Psoas muscle (tissue), 8 donors: ENCODE measurements at regions of chr11 and their contacts with region 1.

Region 1: GRCh38 chr11:124673333-124674167 is at the starts of genes SIAE and SPA17:
- DNase-seq: peak; percentile 94 to 96
- ATAC-seq: peak; percentile 99
- H3K4me3 ChIP-seq: peak within 1 kb of the TSS; percentile 77
- H3K27ac ChIP-seq: peak within 1 kb of the TSS; percentile 75
- H3K4me1 ChIP-seq: peaks cover 14% of the 10 kb centered on the region
- H3K27me3 ChIP-seq: no peaks in the 10 kb centered on the region
- CTCF ChIP-seq: no peak
- total RNA-seq, gene SIAE: 15.7 to 21.8 (median 19.1) TPM
- total RNA-seq, gene SPA17: 0.32 to 1.1 (median 0.73) TPM

Region 2: GRCh38 chr11:124707829-124708228 is 34.3 kb after region 1 on chr11:
- intact Hi-C with region 1: no loop called
- DNase-seq: no peak
- ATAC-seq: no peak
- H3K4me3 ChIP-seq: no peak overlapping the region
- H3K27ac ChIP-seq: no peak overlapping the region
- H3K4me1 ChIP-seq: no peaks in the 10 kb centered on the region
- H3K27me3 ChIP-seq: peaks cover 0 to 4% (median 0%) of the 10 kb centered on the region in 3 donors
- CTCF ChIP-seq: no peak

Region 3: GRCh38 chr11:124724979-124725718 is 51.6 kb after region 1 on chr11:
- intact Hi-C with region 1: loop called in 1 of 2 experiments (anchors 5 kb)
- DNase-seq: peak in 1 of 2 donors; percentile 12
- ATAC-seq: no peak
- H3K4me3 ChIP-seq: no peak overlapping the region
- H3K27ac ChIP-seq: no peak overlapping the region
- H3K4me1 ChIP-seq: no peaks in the 10 kb centered on the region
- H3K27me3 ChIP-seq: peaks cover 0 to 40% (median 9%) of the 10 kb centered on the region in 3 donors
- CTCF ChIP-seq: no peak

Region 4: DNA sequence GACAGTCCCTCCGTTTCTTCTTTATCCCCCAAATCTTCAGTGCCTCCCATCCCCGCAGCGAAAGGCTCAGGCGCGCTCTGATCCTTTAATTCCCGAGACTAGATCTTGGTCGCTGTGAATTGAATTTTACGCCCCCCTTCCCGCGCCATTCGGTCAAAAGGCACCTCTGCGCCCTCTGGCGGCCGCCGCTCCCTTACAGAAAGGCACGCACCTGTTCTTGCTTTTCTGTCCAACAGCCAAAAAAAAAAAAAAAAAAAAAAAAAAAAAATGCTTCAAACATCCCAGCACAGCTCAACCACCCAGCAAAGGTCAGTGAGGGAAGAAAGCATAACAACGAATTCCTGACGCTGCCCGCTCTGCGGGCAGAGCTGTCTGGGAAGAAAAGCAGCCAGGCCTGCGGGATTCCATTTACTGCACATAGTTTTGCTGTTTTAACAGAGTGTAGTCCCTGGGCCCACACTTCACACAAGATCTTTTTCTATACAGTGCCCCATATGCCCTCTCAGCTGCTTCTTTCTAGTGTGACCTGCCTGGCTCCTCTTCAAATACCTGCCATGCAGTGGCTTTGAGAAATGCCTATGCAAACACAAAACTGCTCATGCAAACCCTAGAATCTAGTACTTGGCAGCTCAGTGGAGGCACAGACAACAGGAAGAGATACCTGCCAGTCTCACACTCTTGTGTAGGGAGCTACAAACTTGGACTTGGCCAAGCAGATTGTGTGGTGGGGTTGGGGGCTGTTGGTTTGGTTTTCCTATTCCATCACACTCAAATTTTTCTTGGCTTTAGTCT is 89.8 kb after region 1 on chr11:
- intact Hi-C with region 1: loop called (anchors 1 to 5 kb)
- DNase-seq: peak; percentile 84 to 92
- ATAC-seq: peak; percentile 39 to 79 (median 64)
- H3K4me3 ChIP-seq: peak overlapping the region; percentile 74
- H3K27ac ChIP-seq: peak overlapping the region; percentile 81
- H3K4me1 ChIP-seq: peaks cover 27% of the 10 kb centered on the region
- H3K27me3 ChIP-seq: peaks cover 0 to 39% (median 23%) of the 10 kb centered on the region in 3 donors
- CTCF ChIP-seq: peak; percentile 74

Region 5: GRCh38 chr11:124793466-124794278 is 120.1 kb after region 1 on chr11:
- intact Hi-C with region 1: loop called in 1 of 2 experiments (anchors 2 kb)
- DNase-seq: no peak
- ATAC-seq: peak in 1 of 4 donors; percentile 72
- H3K4me3 ChIP-seq: no peak overlapping the region
- H3K27ac ChIP-seq: no peak overlapping the region
- H3K4me1 ChIP-seq: peaks cover 34% of the 10 kb centered on the region
- H3K27me3 ChIP-seq: no peaks in the 10 kb centered on the region
- CTCF ChIP-seq: peak; percentile 63

Region 6: DNA sequence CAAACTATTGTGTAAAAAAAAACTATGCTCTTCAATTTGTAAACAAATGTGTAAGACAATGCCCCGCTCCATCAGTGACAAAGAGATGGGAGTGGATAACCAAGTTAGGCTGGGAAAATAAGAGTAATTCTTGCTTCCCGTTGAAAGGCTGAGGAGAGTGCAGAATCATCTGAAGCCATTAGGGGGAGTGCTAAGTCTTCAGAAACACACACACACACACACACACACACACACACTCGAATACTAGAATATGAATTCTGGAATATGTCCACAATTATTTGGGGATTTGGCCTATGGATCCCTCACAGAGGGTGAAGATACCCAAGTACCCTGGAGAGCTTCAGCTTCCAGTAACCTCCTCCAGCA is 163.9 kb after region 1 on chr11:
- intact Hi-C with region 1: loop called (anchors 2 kb)
- DNase-seq: no peak
- ATAC-seq: peak in 2 of 4 donors; percentile 53 to 60
- H3K4me3 ChIP-seq: no peak overlapping the region
- H3K27ac ChIP-seq: no peak overlapping the region
- H3K4me1 ChIP-seq: peaks cover 9% of the 10 kb centered on the region
- H3K27me3 ChIP-seq: peaks cover 0 to 46% (median 25%) of the 10 kb centered on the region in 3 donors
- CTCF ChIP-seq: no peak

Region 7: DNA sequence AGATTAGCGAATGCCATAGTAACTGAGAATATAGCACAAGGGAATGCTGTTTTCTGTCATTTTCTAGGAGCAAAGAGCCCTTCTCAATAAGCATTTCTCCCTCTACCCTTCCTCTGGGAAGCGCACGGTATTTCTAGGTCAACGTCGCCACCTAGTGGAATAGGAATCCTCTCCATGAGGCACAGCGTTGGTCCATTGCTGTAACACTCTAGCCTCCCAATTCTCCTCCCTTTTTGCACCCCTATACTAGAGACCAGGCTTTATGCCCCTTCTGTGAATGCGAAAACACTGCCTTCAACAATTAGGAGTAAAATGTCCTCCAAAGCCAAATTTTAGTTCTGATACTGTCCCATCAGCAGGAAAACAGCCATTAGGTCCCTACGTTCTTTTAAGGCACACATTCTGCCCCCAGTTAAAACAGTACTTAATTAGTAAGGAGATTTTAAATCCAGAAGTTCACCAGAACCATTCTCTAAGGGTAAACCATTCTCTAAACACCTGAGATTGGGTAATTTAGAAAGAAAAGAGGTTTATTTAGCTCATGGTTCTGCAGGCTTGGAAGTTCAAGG is 1201.1 kb after region 1 on chr11:
- intact Hi-C with region 1: loop called in 1 of 2 experiments (anchors 10 kb)
- DNase-seq: no peak
- ATAC-seq: peak; percentile 71 to 86 (median 84)
- H3K4me3 ChIP-seq: no peak overlapping the region
- H3K27ac ChIP-seq: no peak overlapping the region
- H3K4me1 ChIP-seq: no peaks in the 10 kb centered on the region
- H3K27me3 ChIP-seq: no peaks in the 10 kb centered on the region
- CTCF ChIP-seq: peak; percentile 68